H1 (cell line): ENCODE measurements at regions of chr2 and their contacts with region 1.

Region 1: DNA sequence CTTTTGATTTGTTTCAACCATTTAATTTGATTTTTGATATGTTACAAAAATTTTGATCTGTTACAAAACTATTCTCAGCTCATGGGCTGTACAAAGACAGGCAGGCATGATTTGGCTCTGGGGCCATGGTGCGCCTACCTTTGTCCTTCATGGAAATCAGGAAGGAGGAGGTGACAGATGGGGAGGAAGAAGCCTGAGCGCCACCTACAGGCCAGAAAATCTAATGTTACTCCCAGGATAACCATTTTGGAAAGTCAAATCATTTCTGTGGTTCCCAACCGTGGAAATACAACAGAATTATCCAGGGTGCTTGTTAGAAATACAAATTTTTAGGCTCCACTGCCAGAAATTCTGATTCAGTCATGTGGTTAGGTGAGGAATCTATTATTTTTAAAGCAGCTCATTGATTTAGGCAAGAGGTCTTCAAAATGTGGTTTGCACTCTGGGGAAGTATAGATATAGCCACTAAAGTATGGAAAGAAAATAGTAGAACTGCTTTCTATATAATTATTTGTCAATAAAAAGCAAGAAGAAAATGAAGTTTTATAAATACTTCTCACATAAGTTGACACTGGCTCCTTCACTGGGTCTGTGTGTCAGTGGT is 93.9 kb downstream of the EVA1A start:
- DNase-seq: peak; percentile 10 to 80
- H3K4me3 ChIP-seq: no peak overlapping the region
- H3K27ac ChIP-seq: no peak overlapping the region
- H3K4me1 ChIP-seq: peaks cover 0 to 3% (median 0%) of the 10 kb centered on the region in 4 experiments; a peak in 2 of 7 replicates
- H3K27me3 ChIP-seq: no peaks in the 10 kb centered on the region
- CTCF ChIP-seq: peak; percentile 44 to 71 (median 65)
- EP300 ChIP-seq: no peak
- POLR2A ChIP-seq: no peak
- RAD21 ChIP-seq: peak; percentile 61 to 67

Region 2: GRCh38 chr2:75480971-75481836 is 14.4 kb after region 1 on chr2:
- CTCF ChIA-PET with region 1: interaction called, 77 read pairs
- POLR2A ChIA-PET with region 1: no interaction called
- DNase-seq: no peak
- H3K4me3 ChIP-seq: no peak overlapping the region
- H3K27ac ChIP-seq: no peak overlapping the region
- H3K4me1 ChIP-seq: peaks cover 0 to 4% (median 0%) of the 10 kb centered on the region in 4 experiments; a peak in 1 of 7 replicates
- H3K27me3 ChIP-seq: no peaks in the 10 kb centered on the region
- CTCF ChIP-seq: peak in 2 of 3 experiments; percentile 33 to 69; a peak in 3 of 4 replicates
- EP300 ChIP-seq: no peak
- POLR2A ChIP-seq: no peak
- RAD21 ChIP-seq: peak; percentile 20 to 47; a peak in 3 of 4 replicates

Region 3: GRCh38 chr2:75595551-75596395 is 129.0 kb after region 1 on chr2:
- CTCF ChIA-PET with region 1: interaction called, 22 read pairs
- POLR2A ChIA-PET with region 1: no interaction called
- DNase-seq: no peak
- H3K4me3 ChIP-seq: no peak overlapping the region
- H3K27ac ChIP-seq: no peak overlapping the region
- H3K4me1 ChIP-seq: no peaks in the 10 kb centered on the region
- H3K27me3 ChIP-seq: no peaks in the 10 kb centered on the region
- CTCF ChIP-seq: no peak
- EP300 ChIP-seq: no peak
- POLR2A ChIP-seq: no peak
- RAD21 ChIP-seq: no peak

Region 4: GRCh38 chr2:75619956-75620740 is 153.3 kb after region 1 on chr2:
- CTCF ChIA-PET with region 1: interaction called, 14 read pairs
- POLR2A ChIA-PET with region 1: no interaction called
- DNase-seq: no peak
- H3K4me3 ChIP-seq: no peak overlapping the region
- H3K27ac ChIP-seq: no peak overlapping the region
- H3K4me1 ChIP-seq: no peaks in the 10 kb centered on the region
- H3K27me3 ChIP-seq: no peaks in the 10 kb centered on the region
- CTCF ChIP-seq: no peak
- EP300 ChIP-seq: no peak
- POLR2A ChIP-seq: no peak
- RAD21 ChIP-seq: no peak